Left cardiac atrium (tissue), 4 donors: ENCODE measurements at regions of chr20 and their contacts with region 1.

Region 1: DNA sequence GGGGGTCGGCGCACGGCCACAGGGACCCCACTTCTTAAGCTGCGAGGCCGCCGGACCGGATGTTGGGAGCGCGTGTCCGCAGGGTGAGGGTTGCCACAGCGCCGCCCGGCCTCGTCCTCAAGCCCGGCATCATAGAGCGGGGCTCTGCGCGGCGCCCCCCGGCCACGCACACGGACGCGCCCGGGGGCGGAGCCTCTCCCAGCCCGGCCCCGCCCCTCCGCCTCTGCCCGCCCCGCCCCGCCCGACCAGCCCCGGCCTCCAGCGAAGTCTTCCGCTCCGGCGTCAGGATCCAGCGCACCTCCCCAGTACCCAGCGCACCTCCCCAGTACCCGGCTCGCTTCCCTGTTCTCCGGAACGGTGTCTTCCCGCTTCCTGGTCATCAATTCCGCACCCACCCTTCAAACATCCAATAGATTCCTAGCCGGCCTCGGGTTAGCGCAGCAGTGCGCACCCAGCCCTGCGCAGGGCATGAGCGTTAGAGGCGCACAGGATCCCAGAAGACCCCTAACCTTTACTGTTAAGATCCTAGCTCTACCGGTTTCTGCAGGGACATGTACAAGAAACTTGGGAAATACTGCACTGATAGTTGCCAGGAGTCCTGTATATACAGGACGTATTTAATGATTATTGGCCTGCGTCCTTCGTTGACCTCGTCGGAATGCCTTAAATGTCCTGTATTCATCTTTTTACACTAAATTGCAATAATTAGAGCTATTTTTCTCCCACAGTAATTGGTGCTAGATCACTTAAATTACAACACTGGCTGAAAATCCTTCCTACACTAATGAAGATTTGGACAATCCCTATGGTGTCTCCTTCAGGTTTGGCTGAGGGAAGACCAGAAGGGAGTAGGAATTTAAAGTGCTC is 535 bp upstream of the DNAAF9 start:
- DNase-seq: peak; percentile 80
- ATAC-seq: peak; percentile 84 to 90

Region 2: GRCh38 chr20:3173610-3174441 is 234.2 kb before region 1 on chr20:
- intact Hi-C with region 1: loop called in 1 of 2 experiments (anchors 10 kb)
- DNase-seq: peak; percentile 93
- ATAC-seq: peak; percentile 97 to 99

Region 3: GRCh38 chr20:3190681-3191111 is 217.3 kb before region 1 on chr20:
- intact Hi-C with region 1: no loop called
- DNase-seq: no peak
- ATAC-seq: no peak

Region 4: DNA sequence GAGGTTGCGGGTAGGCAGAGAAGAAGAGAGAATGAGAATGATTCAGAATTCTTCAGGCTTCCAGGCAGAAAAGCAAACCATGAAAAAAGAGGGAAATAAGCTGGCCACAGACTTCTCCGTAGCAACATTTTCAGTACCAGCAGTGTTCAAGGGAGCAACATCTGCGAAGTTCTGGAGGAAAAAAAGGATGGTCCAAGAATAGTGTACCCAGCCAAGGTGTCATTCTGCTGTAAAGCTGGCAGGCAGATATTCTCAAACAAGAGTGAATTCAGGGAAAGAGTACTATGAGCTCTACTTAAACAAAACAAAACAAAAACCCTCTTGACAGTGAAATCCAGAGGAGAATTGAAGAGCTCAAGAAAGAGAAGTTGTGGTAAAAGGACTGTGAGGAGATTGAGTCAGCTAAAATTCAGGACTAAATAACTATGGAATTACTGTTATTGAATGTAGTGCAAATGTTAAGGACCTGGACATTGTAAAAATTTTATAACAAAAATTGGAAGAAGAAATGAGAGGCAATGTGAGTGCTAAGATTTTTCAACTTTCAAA is 149.3 kb after region 1 on chr20:
- intact Hi-C with region 1: no loop called
- DNase-seq: no peak
- ATAC-seq: no peak